Activated naive CD4-positive, alpha-beta T cell treated with anti-CD3 and anti-CD28 coated beads for 36 hours (primary cell): ENCODE measurements at regions of chr6 and their contacts with region 1.

Region 1: DNA sequence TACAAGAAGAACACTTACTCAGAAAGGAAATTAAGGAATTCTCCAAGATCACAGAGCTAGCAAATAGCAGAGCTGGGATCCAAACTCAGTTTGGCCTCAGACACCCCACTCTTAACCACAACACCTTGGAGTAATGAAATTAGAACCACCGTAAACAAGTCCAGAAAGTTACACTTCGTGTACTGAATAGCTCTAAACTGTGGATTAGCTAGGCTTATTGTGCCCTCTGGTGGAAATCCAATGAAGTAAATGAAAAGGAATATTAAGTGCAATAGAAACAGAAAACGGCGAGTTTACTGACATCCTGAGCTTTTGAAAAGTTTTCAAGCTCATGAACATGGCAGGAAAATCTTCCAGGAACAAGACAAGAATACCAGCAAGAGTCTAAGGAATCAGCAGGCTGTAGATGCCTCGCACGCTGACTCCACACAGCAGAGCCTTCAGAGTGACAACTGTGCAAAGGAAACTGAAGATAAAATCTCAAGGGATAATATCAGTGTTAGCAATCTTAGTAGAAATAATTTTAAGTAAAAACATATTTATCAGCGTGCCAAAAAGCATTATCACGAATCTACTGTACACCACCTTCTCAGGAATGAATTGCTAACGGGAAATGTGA is 34.6 kb downstream of the FBXO5 start:
- DNase-seq: no peak
- H3K4me3 Mint-ChIP-seq: no peak overlapping the region
- H3K27ac Mint-ChIP-seq: no peak overlapping the region
- H3K4me1 Mint-ChIP-seq: peaks cover 6% of the 10 kb centered on the region
- H3K27me3 Mint-ChIP-seq: peaks cover 10% of the 10 kb centered on the region

Region 2: DNA sequence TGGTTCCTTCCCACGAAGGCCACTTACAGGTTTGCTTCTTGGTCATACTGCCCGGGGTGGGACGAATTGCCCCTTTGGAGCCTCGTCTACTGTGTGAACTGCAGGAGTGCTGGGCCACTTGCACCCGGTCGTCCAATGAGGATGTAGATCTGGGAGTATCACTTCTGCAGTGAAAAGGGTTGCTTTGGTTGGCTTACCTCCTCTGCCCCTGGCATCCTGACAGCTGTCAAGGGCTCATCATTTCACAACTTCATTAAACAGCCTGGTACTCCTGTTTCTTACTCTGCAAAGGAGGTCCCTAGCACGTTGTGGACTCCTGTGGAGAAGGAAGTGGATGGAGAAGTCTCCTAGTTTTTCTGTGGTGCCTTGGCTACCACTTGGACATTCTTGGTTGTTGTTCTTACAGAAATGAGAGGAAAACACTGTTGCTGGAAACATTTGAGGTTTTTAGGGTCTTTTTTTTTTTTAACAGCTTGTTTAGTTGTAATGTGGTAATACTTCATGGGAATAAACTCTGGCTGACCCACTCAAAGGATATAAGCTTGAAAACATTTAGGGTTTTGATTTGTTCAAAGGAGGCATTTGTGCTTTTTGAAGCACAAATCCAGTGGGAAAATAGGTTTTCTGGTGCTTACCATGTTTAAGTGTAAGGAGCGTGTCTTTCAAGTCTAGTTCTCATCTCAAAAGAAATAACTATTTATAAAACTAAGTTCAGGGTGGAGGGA is 1647.8 kb before region 1 on chr6:
- CTCF ChIA-PET with region 1: no interaction called
- intact Hi-C with region 1: no loop called
- DNase-seq: no peak
- H3K4me3 Mint-ChIP-seq: no peak overlapping the region
- H3K27ac Mint-ChIP-seq: no peak overlapping the region
- H3K4me1 Mint-ChIP-seq: no peaks in the 10 kb centered on the region
- H3K27me3 Mint-ChIP-seq: no peaks in the 10 kb centered on the region

Region 3: GRCh38 chr6:152484806-152485205 is 463.5 kb before region 1 on chr6:
- CTCF ChIA-PET with region 1: no interaction called
- intact Hi-C with region 1: loop called (anchors 2 kb)
- DNase-seq: no peak
- H3K4me3 Mint-ChIP-seq: no peak overlapping the region
- H3K27ac Mint-ChIP-seq: no peak overlapping the region
- H3K4me1 Mint-ChIP-seq: no peaks in the 10 kb centered on the region
- H3K27me3 Mint-ChIP-seq: peaks cover 7% of the 10 kb centered on the region

Region 4: GRCh38 chr6:152552616-152553209 is 395.5 kb before region 1 on chr6:
- CTCF ChIA-PET with region 1: no interaction called
- intact Hi-C with region 1: loop called (anchors 2 kb)
- DNase-seq: peak; percentile 37
- H3K4me3 Mint-ChIP-seq: no peak overlapping the region
- H3K27ac Mint-ChIP-seq: no peak overlapping the region
- H3K4me1 Mint-ChIP-seq: no peaks in the 10 kb centered on the region
- H3K27me3 Mint-ChIP-seq: peaks cover 22% of the 10 kb centered on the region

Region 5: DNA sequence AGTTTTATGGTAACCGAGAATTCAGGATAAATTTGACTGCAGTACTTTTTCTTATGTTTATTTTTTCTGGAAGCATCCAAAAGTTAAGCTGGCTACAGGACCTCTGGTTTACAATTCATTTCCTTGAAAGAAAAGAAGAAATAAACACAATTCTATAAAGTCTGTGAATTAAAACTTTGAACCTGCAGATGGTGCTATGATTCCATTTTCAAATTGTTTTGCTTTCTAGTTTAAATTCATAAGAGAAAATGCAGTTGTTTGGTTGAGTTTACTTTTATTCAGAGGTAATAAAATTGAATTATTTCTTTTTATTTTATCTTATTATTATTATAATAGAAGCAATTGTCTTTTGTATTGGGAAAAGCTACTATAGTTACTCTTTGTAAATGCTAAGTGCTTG is 199.4 kb before region 1 on chr6:
- CTCF ChIA-PET with region 1: interaction called, 3 read pairs
- intact Hi-C with region 1: loop called (anchors 2 kb)
- DNase-seq: no peak
- H3K4me3 Mint-ChIP-seq: no peak overlapping the region
- H3K27ac Mint-ChIP-seq: no peak overlapping the region
- H3K4me1 Mint-ChIP-seq: no peaks in the 10 kb centered on the region
- H3K27me3 Mint-ChIP-seq: peaks cover 5% of the 10 kb centered on the region

Region 6: DNA sequence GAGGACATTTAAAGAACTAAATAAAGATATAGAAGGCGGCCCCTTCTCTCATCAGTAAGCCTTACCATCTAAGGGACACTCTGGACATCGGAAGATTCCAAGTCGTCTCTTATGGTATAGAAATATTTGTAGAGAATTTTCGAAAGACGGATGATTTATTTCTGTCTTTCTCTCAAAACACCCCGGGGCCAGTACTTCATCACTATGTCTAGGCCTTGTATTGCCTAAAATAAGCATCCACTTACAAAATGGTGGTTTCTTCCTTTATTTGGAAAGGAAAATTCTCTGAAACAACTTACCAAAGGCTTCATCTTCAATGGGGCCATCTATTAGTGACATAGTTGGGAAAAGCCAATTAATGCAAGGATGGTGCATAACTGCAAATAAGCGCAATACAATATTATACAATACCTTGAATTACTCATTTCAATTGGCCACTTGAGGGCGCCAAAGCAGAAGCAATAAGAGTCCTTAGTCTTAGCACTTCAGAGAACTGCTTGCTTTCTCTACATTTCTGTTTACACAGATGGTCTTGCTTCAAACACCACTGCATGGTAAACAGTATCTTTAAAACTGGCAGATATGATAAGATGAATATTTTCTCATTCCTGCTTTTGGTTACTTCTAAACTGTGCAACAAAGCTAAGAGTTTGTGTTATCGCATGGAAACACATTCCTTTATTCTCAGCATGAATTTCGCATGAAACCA is 84.5 kb before region 1 on chr6:
- CTCF ChIA-PET with region 1: interaction called, 37 read pairs
- intact Hi-C with region 1: loop called (anchors 1 kb)
- DNase-seq: peak; percentile 81
- H3K4me3 Mint-ChIP-seq: no peak overlapping the region
- H3K27ac Mint-ChIP-seq: no peak overlapping the region
- H3K4me1 Mint-ChIP-seq: no peaks in the 10 kb centered on the region
- H3K27me3 Mint-ChIP-seq: peaks cover 16% of the 10 kb centered on the region

Region 7: DNA sequence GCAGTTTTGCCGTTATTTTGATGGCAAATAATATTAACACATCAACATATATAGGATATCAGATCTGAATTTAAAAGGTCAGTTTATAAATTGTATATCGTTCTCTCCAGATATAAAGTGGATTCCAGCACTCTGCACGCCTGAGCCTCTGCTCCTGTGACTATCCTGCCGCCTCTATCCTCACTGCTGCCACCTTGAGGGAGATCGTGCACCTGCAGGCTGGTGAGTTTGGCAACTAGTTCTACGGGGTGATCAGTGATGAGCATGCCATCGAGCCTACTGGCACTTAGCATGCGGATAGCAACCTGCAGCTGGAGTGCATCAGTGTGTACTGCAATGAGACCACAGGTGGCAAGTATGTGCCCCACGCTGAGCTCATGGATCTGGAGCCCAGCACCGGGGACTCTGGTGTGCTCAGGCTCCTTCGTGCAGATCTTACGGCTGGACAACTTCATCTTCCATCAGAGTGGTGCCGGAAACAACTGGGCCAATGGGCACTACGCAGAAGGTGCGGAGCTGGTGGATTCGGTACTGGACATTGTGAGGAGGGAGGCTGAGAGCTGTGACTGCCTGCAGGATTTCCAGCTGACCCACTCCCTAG is 50.4 kb before region 1 on chr6:
- CTCF ChIA-PET with region 1: interaction called, 5 read pairs
- intact Hi-C with region 1: loop called (anchors 5 kb)
- DNase-seq: peak; percentile 83
- H3K4me3 Mint-ChIP-seq: no peak overlapping the region
- H3K27ac Mint-ChIP-seq: no peak overlapping the region
- H3K4me1 Mint-ChIP-seq: no peaks in the 10 kb centered on the region
- H3K27me3 Mint-ChIP-seq: peaks cover 36% of the 10 kb centered on the region

Region 8: GRCh38 chr6:152983637-152984386 is 35.6 kb after region 1 on chr6:
- CTCF ChIA-PET with region 1: no interaction called
- intact Hi-C with region 1: no loop called
- DNase-seq: peak; percentile 93
- H3K4me3 Mint-ChIP-seq: peak overlapping the region; percentile 99
- H3K27ac Mint-ChIP-seq: peak overlapping the region; percentile 100
- H3K4me1 Mint-ChIP-seq: peaks cover 40% of the 10 kb centered on the region
- H3K27me3 Mint-ChIP-seq: no peaks in the 10 kb centered on the region

Region 9: GRCh38 chr6:153038378-153039057 is 90.3 kb after region 1 on chr6:
- CTCF ChIA-PET with region 1: no interaction called
- intact Hi-C with region 1: no loop called
- DNase-seq: no peak
- H3K4me3 Mint-ChIP-seq: no peak overlapping the region
- H3K27ac Mint-ChIP-seq: no peak overlapping the region
- H3K4me1 Mint-ChIP-seq: no peaks in the 10 kb centered on the region
- H3K27me3 Mint-ChIP-seq: peaks cover 9% of the 10 kb centered on the region

Region 10: DNA sequence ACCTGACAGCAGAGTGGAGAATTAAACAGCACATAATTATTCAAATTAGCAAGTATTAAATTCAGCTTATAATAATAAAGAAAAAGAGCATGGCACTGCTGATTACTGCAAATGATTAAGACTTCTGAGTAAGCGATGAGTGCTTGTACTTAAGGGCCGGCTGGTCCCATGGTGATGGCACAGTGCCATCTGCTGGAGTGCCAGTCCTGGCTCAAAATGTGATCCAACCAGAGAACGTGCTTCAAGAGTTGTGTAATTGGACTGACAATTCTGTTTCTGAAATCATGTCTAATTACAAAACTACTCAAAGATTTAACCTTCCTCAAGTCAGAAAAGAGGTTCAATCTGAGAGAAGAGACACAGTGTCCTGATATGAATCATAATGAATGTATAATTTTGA is 364.4 kb after region 1 on chr6:
- CTCF ChIA-PET with region 1: no interaction called
- intact Hi-C with region 1: loop called (anchors 10 kb)
- DNase-seq: peak; percentile 54
- H3K4me3 Mint-ChIP-seq: no peak overlapping the region
- H3K27ac Mint-ChIP-seq: no peak overlapping the region
- H3K4me1 Mint-ChIP-seq: no peaks in the 10 kb centered on the region
- H3K27me3 Mint-ChIP-seq: no peaks in the 10 kb centered on the region